Right lobe of liver (tissue), 6 donors: ENCODE measurements at regions of chr13 and their contacts with region 1.

Region 1: DNA sequence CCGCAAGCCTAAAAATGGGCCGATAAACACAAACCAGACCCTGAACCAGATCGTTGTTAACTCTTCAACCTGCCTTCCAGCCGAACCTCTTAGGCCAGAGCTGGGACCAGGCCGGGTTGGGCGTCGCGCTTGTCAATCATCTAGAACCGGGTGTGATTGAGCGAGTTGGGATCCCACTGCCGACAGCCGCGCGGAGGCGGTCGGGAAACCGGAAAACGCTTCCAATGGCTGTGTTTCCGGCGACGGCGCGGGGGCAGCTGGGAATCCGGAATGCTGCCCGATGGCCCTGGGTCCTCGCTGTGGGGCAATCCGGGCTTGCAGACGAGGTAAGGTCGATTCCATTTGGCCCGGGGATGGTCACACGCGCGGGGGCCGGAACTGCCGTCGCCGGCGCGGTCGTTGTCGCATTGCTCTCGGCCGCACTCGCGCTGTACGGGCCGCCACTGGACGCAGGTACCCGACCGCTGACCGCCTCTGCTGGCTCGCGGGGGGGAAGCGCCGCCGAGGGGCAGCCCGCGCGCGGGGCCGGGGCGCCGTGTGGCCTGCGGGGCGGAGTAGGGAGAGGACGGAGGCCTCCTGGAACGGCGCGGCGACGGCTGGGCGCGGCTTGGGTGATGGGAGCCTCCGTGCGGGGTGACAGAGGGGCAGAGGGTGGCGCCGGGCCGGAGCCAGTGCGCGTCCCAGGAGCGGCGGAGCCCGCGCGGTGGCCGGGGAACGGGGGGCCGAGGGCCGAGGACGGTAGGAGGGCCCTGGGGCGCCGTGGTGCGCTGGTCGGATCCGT is at the start of gene NAXD:
- DNase-seq: peak; percentile 94 to 97 (median 96)
- ATAC-seq: peak; percentile 80 to 91 (median 85)
- H3K4me3 ChIP-seq: peak within 1 kb of the TSS; percentile 81 to 86 (median 83)
- H3K27ac ChIP-seq: peak within 1 kb of the TSS; percentile 95 to 99 (median 99)
- H3K4me1 ChIP-seq: peaks cover 0 to 30% (median 14%) of the 10 kb centered on the region in 4 donors
- H3K27me3 ChIP-seq: no peaks in the 10 kb centered on the region
- CTCF ChIP-seq: no peak
- POLR2A ChIP-seq: peak; percentile 94
- total RNA-seq, gene NAXD: 24.2 to 41.9 (median 29.9) TPM

Region 2: GRCh38 chr13:110715395-110716235 is 100.1 kb after region 1 on chr13:
- intact Hi-C with region 1: loop called in 1 of 2 experiments (anchors 10 kb)
- DNase-seq: peak; percentile 99
- ATAC-seq: peak; percentile 65 to 76 (median 66)
- H3K4me3 ChIP-seq: peak overlapping the region; percentile 85 to 99 (median 99)
- H3K27ac ChIP-seq: peak overlapping the region; percentile 94 to 99 (median 98)
- H3K4me1 ChIP-seq: peaks cover 0 to 19% (median 11%) of the 10 kb centered on the region in 4 donors
- H3K27me3 ChIP-seq: no peaks in the 10 kb centered on the region
- CTCF ChIP-seq: no peak
- POLR2A ChIP-seq: peak; percentile 77